ENCODE measurements at regions of chr6 and their contacts with region 1.

Region 1: GRCh38 chr6:133837801-133838349 is 51.0 kb upstream of the TCF21 start:
- DNase-seq: peak; percentile 77
- ATAC-seq: peak; percentile 94
- H3K4me3 ChIP-seq: peak overlapping the region; percentile 81
- H3K27ac ChIP-seq: peak overlapping the region; percentile 70
- H3K4me1 ChIP-seq: no peaks in the 10 kb centered on the region
- H3K27me3 ChIP-seq: no peaks in the 10 kb centered on the region
- CTCF ChIP-seq: peak; percentile 94

Region 2: GRCh38 chr6:133396233-133396983 is 441.5 kb before region 1 on chr6:
- CTCF ChIA-PET with region 1: no interaction called
- POLR2A ChIA-PET with region 1: no interaction called
- intact Hi-C with region 1: no loop called
- DNase-seq: peak; percentile 35
- ATAC-seq: no peak
- H3K4me3 ChIP-seq: no peak overlapping the region
- H3K27ac ChIP-seq: no peak overlapping the region
- H3K4me1 ChIP-seq: no peaks in the 10 kb centered on the region
- H3K27me3 ChIP-seq: no peaks in the 10 kb centered on the region
- CTCF ChIP-seq: no peak

Region 3: GRCh38 chr6:133707456-133707855 is 130.4 kb before region 1 on chr6:
- CTCF ChIA-PET with region 1: no interaction called
- POLR2A ChIA-PET with region 1: no interaction called
- intact Hi-C with region 1: loop called (anchors 5 kb)
- DNase-seq: no peak
- ATAC-seq: no peak
- H3K4me3 ChIP-seq: no peak overlapping the region
- H3K27ac ChIP-seq: no peak overlapping the region
- H3K4me1 ChIP-seq: peaks cover 20% of the 10 kb centered on the region
- H3K27me3 ChIP-seq: no peaks in the 10 kb centered on the region
- CTCF ChIP-seq: no peak

Region 4: GRCh38 chr6:133916650-133917151 is 78.8 kb after region 1 on chr6:
- CTCF ChIA-PET with region 1: interaction called, 6 read pairs
- POLR2A ChIA-PET with region 1: interaction called, 3 read pairs
- intact Hi-C with region 1: loop called (anchors 1 kb)
- DNase-seq: peak; percentile 86
- ATAC-seq: peak; percentile 82
- H3K4me3 ChIP-seq: 0 out of 2 replicates have a peak overlapping the region, but pooled peaks have one; percentile 39
- H3K27ac ChIP-seq: no peak overlapping the region
- H3K4me1 ChIP-seq: no peaks in the 10 kb centered on the region; the same call in 1 of the 2 replicates
- H3K27me3 ChIP-seq: no peaks in the 10 kb centered on the region
- CTCF ChIP-seq: peak; percentile 89

Measured in PC-3 (cell line).